WTC11 (cell line): ENCODE measurements at regions of chr4 and their contacts with region 1.

Region 1: GRCh38 chr4:3009422-3009821 is 46.1 kb downstream of the GRK4 start:
- DNase-seq: peak; percentile 28
- ATAC-seq: peak; percentile 91
- H3K4me3 Mint-ChIP-seq: no peak overlapping the region
- H3K27ac Mint-ChIP-seq: no peak overlapping the region
- H3K4me1 Mint-ChIP-seq: no peaks in the 10 kb centered on the region
- H3K27me3 Mint-ChIP-seq: no peaks in the 10 kb centered on the region
- CTCF ChIP-seq: no peak

Region 2: GRCh38 chr4:3031357-3032082 is 22.1 kb after region 1 on chr4:
- CTCF ChIA-PET with region 1: interaction called, 10 read pairs
- POLR2A ChIA-PET with region 1: no interaction called
- DNase-seq: no peak
- ATAC-seq: no peak
- H3K4me3 Mint-ChIP-seq: no peak overlapping the region
- H3K27ac Mint-ChIP-seq: no peak overlapping the region
- H3K4me1 Mint-ChIP-seq: no peaks in the 10 kb centered on the region
- H3K27me3 Mint-ChIP-seq: no peaks in the 10 kb centered on the region
- CTCF ChIP-seq: no peak

Region 3: DNA sequence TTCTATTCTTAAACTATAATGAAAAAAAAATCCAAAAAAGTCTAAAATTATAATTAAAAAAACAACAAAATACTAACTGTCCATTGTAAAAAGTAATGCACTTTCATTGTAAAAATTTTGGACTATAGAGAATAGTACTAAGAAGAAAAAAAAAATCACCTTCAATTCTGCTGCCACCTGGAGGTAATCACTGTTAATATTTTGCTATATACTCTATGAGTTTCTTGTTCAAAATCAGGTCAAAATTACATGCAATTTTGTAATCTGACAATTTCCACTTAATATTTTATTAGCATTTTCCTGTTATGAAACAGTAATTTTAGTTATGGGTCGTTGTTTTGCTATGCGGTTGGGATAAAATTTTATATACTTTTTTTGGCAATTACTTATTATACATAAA is 127.0 kb after region 1 on chr4:
- CTCF ChIA-PET with region 1: no interaction called
- POLR2A ChIA-PET with region 1: no interaction called
- DNase-seq: no peak
- ATAC-seq: no peak
- H3K4me3 Mint-ChIP-seq: no peak overlapping the region
- H3K27ac Mint-ChIP-seq: no peak overlapping the region
- H3K4me1 Mint-ChIP-seq: no peaks in the 10 kb centered on the region
- H3K27me3 Mint-ChIP-seq: no peaks in the 10 kb centered on the region
- CTCF ChIP-seq: no peak